Activated CD4-positive, alpha-beta memory T cell treated with anti-CD3 and anti-CD28 coated beads for 36 hours (primary cell): ENCODE measurements at regions of chr15 and their contacts with region 1.

Region 1: GRCh38 chr15:85723960-85724945 is 70.5 kb downstream of the KLHL25 start:
- DNase-seq: peak; percentile 44
- H3K4me3 Mint-ChIP-seq: peak overlapping the region; percentile 58
- H3K27ac Mint-ChIP-seq: peak overlapping the region; percentile 93
- H3K4me1 Mint-ChIP-seq: peaks cover 64% of the 10 kb centered on the region
- H3K27me3 Mint-ChIP-seq: no peaks in the 10 kb centered on the region

Region 2: DNA sequence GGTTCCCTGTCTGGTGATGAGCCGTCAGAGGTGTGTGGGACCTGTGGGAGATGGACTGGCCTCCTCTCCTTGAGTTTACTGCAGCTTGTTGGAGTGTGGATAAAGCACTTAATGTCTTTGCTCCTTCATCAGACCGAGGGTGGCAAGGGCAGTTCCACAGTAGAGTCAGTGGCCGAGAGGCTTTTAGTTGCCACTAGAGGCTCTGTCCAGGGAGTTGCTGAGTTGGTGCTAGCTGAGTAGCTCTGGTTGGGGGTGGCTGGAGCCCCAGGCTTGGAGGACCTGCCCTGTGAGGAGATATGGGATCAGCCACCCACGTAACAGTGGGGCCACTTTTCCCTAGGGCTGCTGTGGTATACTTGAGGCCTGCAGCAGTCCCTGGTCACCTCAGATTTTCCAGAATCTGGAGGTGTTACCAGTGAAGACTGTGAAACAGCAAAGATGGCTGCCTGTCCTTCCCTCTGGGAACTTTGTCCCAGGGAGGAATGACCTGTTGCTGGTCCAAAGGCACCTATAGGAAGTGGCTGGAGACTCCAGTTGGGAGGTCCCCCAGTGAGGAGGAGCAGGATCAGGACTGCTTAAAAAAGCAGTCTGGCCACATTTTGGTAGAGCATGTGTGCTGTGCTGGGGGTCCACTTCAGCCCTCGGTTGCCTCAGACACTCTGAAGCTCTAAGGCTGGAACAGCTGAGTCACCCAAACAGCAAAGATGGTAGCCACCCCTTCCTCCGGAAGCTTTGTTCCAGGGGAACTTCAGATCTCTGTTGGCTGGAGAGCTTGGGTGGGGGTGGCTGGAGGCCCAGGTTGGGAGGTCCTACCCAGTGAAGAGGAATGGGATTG is 271.0 kb before region 1 on chr15:
- CTCF ChIA-PET with region 1: no interaction called
- POLR2A ChIA-PET with region 1: no interaction called
- intact Hi-C with region 1: no loop called
- DNase-seq: no peak
- H3K4me3 Mint-ChIP-seq: no peak overlapping the region
- H3K27ac Mint-ChIP-seq: peak overlapping the region; percentile 31
- H3K4me1 Mint-ChIP-seq: peaks cover 68% of the 10 kb centered on the region
- H3K27me3 Mint-ChIP-seq: no peaks in the 10 kb centered on the region

Region 3: DNA sequence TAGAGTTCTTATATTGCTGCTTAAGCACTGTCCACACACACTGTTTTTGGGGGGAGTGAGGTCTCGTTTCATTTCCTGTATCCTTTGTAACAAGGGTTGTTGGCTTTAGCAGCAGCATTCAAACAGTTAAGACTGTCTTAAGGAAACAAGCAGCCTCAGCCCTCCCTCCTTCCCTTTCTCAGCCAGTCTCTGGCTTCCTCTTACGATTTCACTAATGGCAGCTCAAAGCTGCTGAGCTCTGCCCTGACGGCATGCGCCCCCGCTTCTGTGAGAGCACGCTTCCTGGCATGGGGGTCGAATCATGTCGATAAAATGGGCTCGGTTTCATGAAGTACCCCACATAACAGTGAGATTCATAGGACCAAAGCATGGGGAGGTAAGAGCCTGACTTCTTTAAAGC is 34.5 kb before region 1 on chr15:
- CTCF ChIA-PET with region 1: interaction called, 4 read pairs
- POLR2A ChIA-PET with region 1: interaction called, 7 read pairs
- intact Hi-C with region 1: loop called (anchors 1 kb)
- DNase-seq: peak; percentile 78
- H3K4me3 Mint-ChIP-seq: peak overlapping the region; percentile 81
- H3K27ac Mint-ChIP-seq: peak overlapping the region; percentile 98
- H3K4me1 Mint-ChIP-seq: peaks cover 78% of the 10 kb centered on the region
- H3K27me3 Mint-ChIP-seq: no peaks in the 10 kb centered on the region

Region 4: GRCh38 chr15:85794603-85795336 is 70.5 kb after region 1 on chr15 and contains the start of gene KLHL25:
- CTCF ChIA-PET with region 1: interaction called, 3 read pairs
- POLR2A ChIA-PET with region 1: no interaction called
- intact Hi-C with region 1: loop called (anchors 2 kb)
- DNase-seq: peak; percentile 95
- H3K4me3 Mint-ChIP-seq: peak within 1 kb of the TSS; percentile 90
- H3K27ac Mint-ChIP-seq: peak within 1 kb of the TSS; percentile 74
- H3K4me1 Mint-ChIP-seq: peaks cover 32% of the 10 kb centered on the region
- H3K27me3 Mint-ChIP-seq: no peaks in the 10 kb centered on the region
- total RNA-seq, gene KLHL25: 5.3 to 5.7 TPM